PC-3 (cell line): ENCODE measurements at regions of chr21 and their contacts with region 1.

Region 1: GRCh38 chr21:32916522-32917099 is 109.1 kb upstream of the OLIG2 start:
- DNase-seq: peak; percentile 39
- ATAC-seq: peak; percentile 58
- H3K4me3 ChIP-seq: no peak overlapping the region
- H3K27ac ChIP-seq: no peak overlapping the region
- H3K4me1 ChIP-seq: no peaks in the 10 kb centered on the region
- H3K27me3 ChIP-seq: peaks cover 37% of the 10 kb centered on the region
- CTCF ChIP-seq: peak; percentile 67

Region 2: DNA sequence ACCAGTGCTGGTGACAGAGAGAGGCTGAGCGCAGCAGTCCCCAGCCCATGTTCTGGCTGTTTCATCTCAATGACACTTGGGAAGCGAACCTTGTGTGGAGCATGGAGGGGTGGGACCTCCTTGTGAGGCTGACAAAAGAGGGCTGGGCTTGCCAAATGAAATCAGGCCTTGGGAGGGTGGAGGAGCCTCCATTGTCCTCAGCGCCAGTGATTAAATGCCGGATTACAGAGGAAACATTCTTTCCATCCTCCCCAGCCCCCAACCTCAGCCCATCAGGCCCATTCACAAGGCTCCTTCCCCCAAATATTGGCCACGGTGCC is 81.7 kb before region 1 on chr21:
- CTCF ChIA-PET with region 1: no interaction called
- POLR2A ChIA-PET with region 1: no interaction called
- intact Hi-C with region 1: loop called (anchors 5 kb)
- DNase-seq: no peak
- ATAC-seq: no peak
- H3K4me3 ChIP-seq: no peak overlapping the region
- H3K27ac ChIP-seq: no peak overlapping the region
- H3K4me1 ChIP-seq: no peaks in the 10 kb centered on the region; the same call in 1 of the 2 replicates
- H3K27me3 ChIP-seq: peaks cover 55% of the 10 kb centered on the region
- CTCF ChIP-seq: no peak

Region 3: GRCh38 chr21:33025489-33026442 is 109.2 kb after region 1 on chr21 and contains the start of gene OLIG2:
- CTCF ChIA-PET with region 1: no interaction called
- POLR2A ChIA-PET with region 1: no interaction called
- intact Hi-C with region 1: no loop called
- DNase-seq: no peak
- ATAC-seq: no peak
- H3K4me3 ChIP-seq: no peak within 1 kb of the TSS
- H3K27ac ChIP-seq: no peak within 1 kb of the TSS
- H3K4me1 ChIP-seq: no peaks in the 10 kb centered on the region
- H3K27me3 ChIP-seq: peaks cover 83% of the 10 kb centered on the region
- CTCF ChIP-seq: no peak
- total RNA-seq, gene OLIG2: not detected in 2 replicates